Panc1 (cell line): ENCODE measurements at regions of chr13 and their contacts with region 1.

Region 1: DNA sequence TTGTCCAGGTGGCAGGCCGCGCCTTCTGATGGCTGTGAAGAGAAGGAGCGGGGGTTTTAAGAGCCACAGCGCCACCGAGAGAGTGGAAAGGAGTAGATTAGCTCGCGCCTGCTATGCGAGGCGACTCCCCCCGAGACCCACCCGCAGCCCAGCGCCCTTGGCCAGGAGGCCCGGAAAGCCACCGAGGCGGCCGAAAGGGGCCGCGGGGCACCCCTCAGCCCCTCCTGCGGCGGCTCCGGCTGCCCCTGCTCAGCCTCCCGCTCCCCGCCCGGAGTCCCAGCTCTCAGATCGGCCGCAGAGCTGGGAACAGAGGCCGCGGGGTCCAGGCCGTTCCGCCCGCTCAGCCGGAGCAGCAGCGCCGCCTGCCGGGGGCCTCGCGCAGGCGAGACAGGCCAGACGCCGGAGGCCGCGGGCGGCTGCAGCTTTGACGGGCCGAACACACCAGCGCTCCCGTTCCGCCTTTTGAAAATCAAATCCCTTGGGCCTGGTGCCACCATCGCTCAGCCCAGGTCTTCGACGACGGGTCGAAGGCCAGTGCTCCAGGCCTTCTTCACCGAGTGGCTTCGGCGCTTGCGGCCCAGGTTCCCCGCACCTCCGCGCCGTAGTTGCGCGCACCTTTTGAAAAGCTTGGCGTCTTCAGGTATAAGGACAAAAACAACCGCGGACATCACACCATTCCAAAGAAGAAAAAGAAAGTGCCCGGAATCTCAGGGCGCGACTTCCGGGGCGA is 15.3 kb downstream of the CDX2 start:
- DNase-seq: no peak
- ATAC-seq: peak; percentile 97
- H3K4me3 ChIP-seq: peak overlapping the region; percentile 52 to 66
- H3K27ac ChIP-seq: peak overlapping the region; percentile 67
- H3K4me1 ChIP-seq: peaks cover 9% of the 10 kb centered on the region
- H3K27me3 ChIP-seq: no peaks in the 10 kb centered on the region
- CTCF ChIP-seq: peak; percentile 96

Region 2: GRCh38 chr13:27658546-27658945 is 295.3 kb before region 1 on chr13:
- CTCF ChIA-PET with region 1: no interaction called
- POLR2A ChIA-PET with region 1: no interaction called
- in situ Hi-C with region 1: no loop called
- intact Hi-C with region 1: no loop called
- DNase-seq: no peak
- ATAC-seq: no peak
- H3K4me3 ChIP-seq: no peak overlapping the region
- H3K27ac ChIP-seq: no peak overlapping the region
- H3K4me1 ChIP-seq: no peaks in the 10 kb centered on the region
- H3K27me3 ChIP-seq: no peaks in the 10 kb centered on the region
- CTCF ChIP-seq: no peak

Region 3: GRCh38 chr13:27770809-27771208 is 183.0 kb before region 1 on chr13:
- CTCF ChIA-PET with region 1: no interaction called
- POLR2A ChIA-PET with region 1: interaction called, 15 read pairs
- in situ Hi-C with region 1: no loop called
- intact Hi-C with region 1: no loop called
- DNase-seq: peak; percentile 18
- ATAC-seq: peak; percentile 84
- H3K4me3 ChIP-seq: no peak overlapping the region
- H3K27ac ChIP-seq: no peak overlapping the region
- H3K4me1 ChIP-seq: no peaks in the 10 kb centered on the region
- H3K27me3 ChIP-seq: 0 out of 2 replicates have a peak, but pooled peaks cover 2% of the 10 kb centered on the region
- CTCF ChIP-seq: peak; percentile 71

Region 4: GRCh38 chr13:27783111-27783510 is 170.7 kb before region 1 on chr13:
- CTCF ChIA-PET with region 1: no interaction called
- POLR2A ChIA-PET with region 1: interaction called, 10 read pairs
- in situ Hi-C with region 1: no loop called
- intact Hi-C with region 1: no loop called
- DNase-seq: no peak
- ATAC-seq: no peak
- H3K4me3 ChIP-seq: no peak overlapping the region
- H3K27ac ChIP-seq: no peak overlapping the region
- H3K4me1 ChIP-seq: no peaks in the 10 kb centered on the region
- H3K27me3 ChIP-seq: no peaks in the 10 kb centered on the region
- CTCF ChIP-seq: peak; percentile 31; the same call in 1 of the 2 replicates

Region 5: DNA sequence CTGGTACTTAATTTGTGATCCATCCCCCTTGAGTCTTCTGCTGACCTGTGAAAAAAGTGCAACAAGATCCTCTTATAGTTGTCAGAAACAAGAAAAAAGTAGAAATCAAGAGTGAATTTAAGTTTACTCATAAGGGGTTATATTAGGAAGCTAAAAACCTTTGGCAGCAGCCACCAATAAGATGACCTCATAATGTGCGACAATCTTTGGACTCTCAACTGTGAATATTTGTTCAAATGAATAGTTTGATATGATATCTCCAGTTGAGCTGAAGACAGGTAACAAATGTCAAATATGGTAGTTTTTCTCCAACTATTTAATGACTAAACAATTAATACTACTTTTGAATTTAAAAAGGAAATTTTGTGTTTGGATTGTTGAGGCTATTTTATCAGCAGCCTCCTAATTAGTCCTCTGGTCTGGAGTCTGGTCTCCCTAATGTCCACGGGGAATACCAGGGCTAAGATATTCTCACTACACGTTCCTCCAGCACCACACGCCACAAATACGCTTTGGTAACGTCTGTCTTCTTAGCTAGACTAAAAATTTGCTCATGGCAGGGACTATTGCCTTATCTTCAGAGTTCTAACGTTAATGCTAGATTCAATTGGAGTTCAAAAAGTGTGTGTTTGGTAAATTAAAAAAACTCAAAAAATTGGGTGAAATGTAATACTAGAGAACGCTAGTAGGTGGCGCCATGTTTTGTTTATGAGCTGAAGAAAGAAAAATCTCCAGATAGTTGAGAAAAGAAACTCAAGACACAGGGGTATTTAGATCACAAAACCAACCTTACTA is 85.0 kb before region 1 on chr13:
- CTCF ChIA-PET with region 1: interaction called, 19 read pairs
- POLR2A ChIA-PET with region 1: interaction called, 3 read pairs
- in situ Hi-C with region 1: no loop called
- intact Hi-C with region 1: loop called (anchors 5 kb)
- DNase-seq: peak; percentile 2
- ATAC-seq: no peak
- H3K4me3 ChIP-seq: no peak overlapping the region
- H3K27ac ChIP-seq: no peak overlapping the region
- H3K4me1 ChIP-seq: no peaks in the 10 kb centered on the region; the same call in 1 of the 2 replicates
- H3K27me3 ChIP-seq: no peaks in the 10 kb centered on the region
- CTCF ChIP-seq: peak; percentile 67